ENCODE measurements at regions of chr15 and their contacts with region 1.

Region 1: GRCh38 chr15:75023181-75023871 is at the start of gene PPCDC:
- DNase-seq: peak; percentile 97
- H3K4me3 ChIP-seq: peak within 1 kb of the TSS; percentile 67 to 97 (median 80)
- H3K27ac ChIP-seq: peak within 1 kb of the TSS; percentile 87 to 95 (median 92)
- H3K4me1 ChIP-seq: peaks cover 10 to 18% (median 13%) of the 10 kb centered on the region in 4 donors
- H3K27me3 ChIP-seq: no peaks in the 10 kb centered on the region
- CTCF ChIP-seq: no peak
- EP300 ChIP-seq: no peak
- POLR2A ChIP-seq: peak; percentile 93
- total RNA-seq, gene PPCDC: 5.2 to 54.5 (median 25.2) TPM

Region 2: GRCh38 chr15:74995241-74995778 is 28.0 kb before region 1 on chr15 and contains the start of gene SCAMP5:
- in situ Hi-C with region 1: no loop called
- intact Hi-C with region 1: no loop called
- DNase-seq: peak; percentile 95
- H3K4me3 ChIP-seq: peak within 1 kb of the TSS; percentile 50 to 68 (median 60)
- H3K27ac ChIP-seq: peak within 1 kb of the TSS in 2 of 4 donors; percentile 2 to 34
- H3K4me1 ChIP-seq: peaks cover 0 to 23% (median 13%) of the 10 kb centered on the region in 4 donors
- H3K27me3 ChIP-seq: peaks cover 31% of the 10 kb centered on the region
- CTCF ChIP-seq: no peak
- EP300 ChIP-seq: no peak
- POLR2A ChIP-seq: no peak
- total RNA-seq, gene SCAMP5: 11.3 to 24.8 (median 15.8) TPM in 3 of 4 donors, not detected in the other

Region 3: DNA sequence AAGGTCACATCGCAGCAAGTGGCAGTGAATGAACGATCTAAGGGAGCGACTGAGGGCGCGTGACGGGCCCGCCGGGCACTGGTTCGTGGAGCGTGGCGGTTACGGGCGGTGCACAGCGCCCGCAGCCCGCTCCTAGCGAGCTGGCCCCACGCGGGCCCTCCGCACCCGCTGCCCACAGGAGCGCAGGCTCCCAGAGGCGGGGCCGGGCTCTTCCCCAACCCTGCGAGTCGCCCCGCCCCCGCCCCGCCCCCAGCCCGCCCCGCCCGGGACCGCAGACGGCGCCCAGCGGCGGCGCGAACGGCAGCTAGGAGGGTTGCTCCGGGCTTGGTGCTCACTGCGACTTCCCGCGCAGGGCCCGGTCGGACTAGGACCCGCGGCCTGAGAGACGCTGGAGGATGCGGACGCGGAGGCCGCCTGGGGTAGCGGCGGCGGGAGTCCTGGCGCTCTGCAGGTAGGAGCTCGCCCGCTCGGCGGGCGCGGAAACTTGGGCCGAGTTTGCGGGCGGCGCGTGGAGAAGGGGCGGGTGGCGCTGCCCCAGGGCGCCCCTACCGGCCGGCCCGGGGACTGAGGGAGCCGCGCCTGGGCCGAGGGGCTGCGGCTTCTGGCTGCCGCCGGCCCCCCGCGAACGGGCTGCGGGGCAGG is 178.4 kb after region 1 on chr15 and contains the start of gene C15orf39:
- in situ Hi-C with region 1: loop called in 2 of 4 experiments (anchors 5 to 10 kb)
- intact Hi-C with region 1: loop called (anchors 2 kb)
- DNase-seq: peak; percentile 78
- H3K4me3 ChIP-seq: peak within 1 kb of the TSS; percentile 79 to 89 (median 86)
- H3K27ac ChIP-seq: peak within 1 kb of the TSS; percentile 96 to 97 (median 96)
- H3K4me1 ChIP-seq: peaks cover 30 to 51% (median 37%) of the 10 kb centered on the region in 4 donors
- H3K27me3 ChIP-seq: no peaks in the 10 kb centered on the region
- CTCF ChIP-seq: peak; percentile 60 to 98 (median 94)
- EP300 ChIP-seq: no peak
- POLR2A ChIP-seq: peak; percentile 94
- total RNA-seq, gene C15orf39: 20.9 to 27.9 (median 26.7) TPM

Region 4: DNA sequence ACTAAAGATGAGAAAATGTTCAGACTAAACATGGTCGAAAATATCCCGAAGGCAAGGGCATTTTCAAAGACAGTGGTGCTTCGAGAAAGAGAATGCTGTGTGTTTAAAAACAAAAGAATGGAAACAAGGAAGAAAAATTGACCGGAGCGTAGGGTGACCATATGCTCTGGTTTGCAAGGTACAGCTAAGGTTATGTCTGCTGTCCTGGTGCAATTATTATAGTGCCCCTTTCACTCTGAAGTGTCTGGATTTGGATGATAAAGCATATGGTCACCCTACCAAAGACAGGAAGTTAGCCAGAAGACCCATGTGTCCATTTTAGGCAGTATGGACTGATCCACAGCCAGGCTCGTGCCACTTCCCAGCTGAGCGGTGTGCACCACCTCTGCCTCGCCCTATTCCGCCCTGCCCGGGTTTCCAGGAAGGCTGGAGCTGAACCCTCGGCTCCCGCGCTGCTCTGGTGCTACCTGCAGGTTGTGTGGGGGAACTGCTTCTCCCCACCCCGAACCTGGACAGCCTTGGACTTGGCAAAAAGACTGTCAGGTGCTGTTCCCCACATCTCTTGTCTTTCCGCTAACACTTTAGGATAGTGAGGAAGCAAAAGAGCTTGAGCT is 284.6 kb after region 1 on chr15:
- in situ Hi-C with region 1: loop called in 1 of 4 experiments (anchors 25 kb)
- intact Hi-C with region 1: no loop called
- DNase-seq: peak; percentile 77
- H3K4me3 ChIP-seq: no peak overlapping the region
- H3K27ac ChIP-seq: no peak overlapping the region
- H3K4me1 ChIP-seq: no peaks in the 10 kb centered on the region
- H3K27me3 ChIP-seq: peaks cover 27% of the 10 kb centered on the region
- CTCF ChIP-seq: peak; percentile 35 to 66 (median 50)
- EP300 ChIP-seq: no peak
- POLR2A ChIP-seq: no peak

Region 5: GRCh38 chr15:75335705-75336355 is 312.5 kb after region 1 on chr15 and contains the start of gene COMMD4:
- in situ Hi-C with region 1: loop called in 1 of 4 experiments (anchors 25 kb)
- intact Hi-C with region 1: no loop called
- DNase-seq: peak; percentile 96
- H3K4me3 ChIP-seq: peak within 1 kb of the TSS; percentile 47 to 98 (median 73)
- H3K27ac ChIP-seq: peak within 1 kb of the TSS; percentile 75 to 84 (median 81)
- H3K4me1 ChIP-seq: peaks cover 7 to 18% (median 16%) of the 10 kb centered on the region in 4 donors
- H3K27me3 ChIP-seq: no peaks in the 10 kb centered on the region
- CTCF ChIP-seq: no peak
- EP300 ChIP-seq: peak; percentile 43
- POLR2A ChIP-seq: peak; percentile 21
- total RNA-seq, gene COMMD4: 33.2 to 97.3 (median 70.3) TPM

Measured in transverse colon (tissue), 4 donors.